Natural killer cell (primary cell): ENCODE measurements at regions of chr19 and their contacts with region 1.

Region 1: DNA sequence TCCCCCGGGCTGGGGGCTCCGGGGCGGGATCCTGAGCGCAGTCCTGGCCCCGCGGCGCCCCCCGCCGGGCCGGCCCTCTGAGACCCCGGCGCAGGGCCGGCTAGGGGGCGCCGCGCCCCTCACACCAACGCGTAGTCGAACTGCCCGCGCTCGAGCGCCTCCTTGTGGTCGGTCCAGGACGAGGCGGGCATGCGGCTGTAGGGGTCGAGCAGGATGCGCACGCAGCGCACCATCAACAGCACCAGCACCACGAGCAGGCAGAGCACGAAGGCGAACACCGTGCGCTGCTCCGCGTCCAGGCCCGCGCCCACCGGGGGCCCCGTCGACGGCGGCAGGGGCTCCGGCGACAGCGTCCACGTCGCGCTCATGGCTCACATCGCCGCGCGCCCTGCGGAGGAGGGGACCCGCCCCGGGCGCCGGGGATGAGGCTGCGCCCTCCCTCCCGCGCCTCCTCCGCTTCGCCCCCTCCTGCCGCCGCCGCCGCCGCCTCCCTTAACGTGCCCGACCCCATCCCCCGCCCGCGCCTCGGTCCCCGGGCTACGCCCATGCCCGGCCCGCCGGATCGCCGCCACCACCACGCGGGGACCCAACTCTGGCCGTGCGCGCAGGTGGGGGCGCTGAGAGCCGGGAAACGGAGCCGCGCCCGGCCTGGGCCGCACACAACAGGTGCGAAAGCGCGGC is 624 bp downstream of the CTXN1 start:
- DNase-seq: peak; percentile 80 to 91
- ATAC-seq: peak; percentile 11 to 22 (median 16)
- H3K4me3 ChIP-seq: no peak overlapping the region
- H3K4me3 Mint-ChIP-seq: peak overlapping the region; percentile 85
- H3K27ac ChIP-seq: no peak overlapping the region
- H3K27ac Mint-ChIP-seq: peak overlapping the region in 1 of 2 donors; percentile 74
- H3K4me1 ChIP-seq: peaks cover 35% of the 10 kb centered on the region
- H3K4me1 Mint-ChIP-seq: peaks cover 7 to 35% of the 10 kb centered on the region in 2 donors
- H3K27me3 ChIP-seq: no peaks in the 10 kb centered on the region
- H3K27me3 Mint-ChIP-seq: no peaks in the 10 kb centered on the region
- CTCF ChIP-seq: peak; percentile 83

Region 2: DNA sequence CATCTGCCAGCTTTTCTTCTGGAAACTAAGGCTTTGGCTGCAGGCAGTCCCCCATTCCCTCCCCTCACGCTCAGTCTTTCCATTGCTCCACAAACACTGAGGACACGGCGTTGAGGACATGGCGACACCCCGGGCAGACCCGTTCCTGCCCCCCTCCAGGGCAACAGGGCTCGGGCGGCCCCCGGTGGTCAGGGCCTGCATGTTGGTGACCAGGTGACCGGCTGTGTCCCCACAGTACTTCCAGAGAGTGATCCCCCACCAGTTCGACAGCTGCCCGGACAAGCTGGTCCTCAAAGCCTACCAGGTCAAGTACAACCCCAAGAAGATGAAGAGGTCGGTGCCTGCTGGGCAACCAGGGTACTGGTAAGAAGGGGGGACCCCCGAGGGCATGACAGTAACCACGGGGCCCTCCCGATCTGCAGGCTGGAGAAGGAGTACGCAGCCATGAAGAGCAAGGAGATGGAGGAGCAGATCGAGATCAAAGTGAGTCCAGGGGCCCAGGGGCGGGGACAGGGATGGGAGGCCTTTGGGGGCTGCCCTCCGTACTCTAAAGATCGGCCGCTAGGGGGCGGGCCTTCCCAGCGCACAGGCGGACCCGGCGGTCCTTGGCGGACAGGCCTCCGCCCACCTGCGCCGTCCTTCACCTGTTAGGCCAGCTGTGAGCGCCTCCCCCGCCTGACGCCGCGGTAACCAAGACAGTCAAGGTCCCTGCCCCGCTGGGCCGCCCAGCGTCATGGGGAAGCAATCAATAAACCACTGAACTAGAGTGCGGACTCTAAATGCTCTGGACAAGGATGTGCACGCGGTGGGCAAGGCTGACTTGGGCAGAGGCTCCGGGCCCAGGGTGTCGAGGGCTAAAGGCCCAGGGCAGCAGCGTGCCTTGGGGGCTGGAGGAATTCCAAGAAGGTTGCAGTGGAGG is 72.2 kb before region 1 on chr19:
- intact Hi-C with region 1: loop called (anchors 1 kb)
- DNase-seq: peak; percentile 70 to 79
- ATAC-seq: peak; percentile 74 to 98 (median 95)
- H3K4me3 ChIP-seq: no peak overlapping the region
- H3K4me3 Mint-ChIP-seq: no peak overlapping the region
- H3K27ac ChIP-seq: no peak overlapping the region
- H3K27ac Mint-ChIP-seq: peak overlapping the region in 1 of 2 donors; percentile 42
- H3K4me1 ChIP-seq: peaks cover 8% of the 10 kb centered on the region
- H3K4me1 Mint-ChIP-seq: peaks cover 9 to 10% of the 10 kb centered on the region in 2 donors
- H3K27me3 ChIP-seq: no peaks in the 10 kb centered on the region
- H3K27me3 Mint-ChIP-seq: no peaks in the 10 kb centered on the region
- CTCF ChIP-seq: peak; percentile 79

Region 3: DNA sequence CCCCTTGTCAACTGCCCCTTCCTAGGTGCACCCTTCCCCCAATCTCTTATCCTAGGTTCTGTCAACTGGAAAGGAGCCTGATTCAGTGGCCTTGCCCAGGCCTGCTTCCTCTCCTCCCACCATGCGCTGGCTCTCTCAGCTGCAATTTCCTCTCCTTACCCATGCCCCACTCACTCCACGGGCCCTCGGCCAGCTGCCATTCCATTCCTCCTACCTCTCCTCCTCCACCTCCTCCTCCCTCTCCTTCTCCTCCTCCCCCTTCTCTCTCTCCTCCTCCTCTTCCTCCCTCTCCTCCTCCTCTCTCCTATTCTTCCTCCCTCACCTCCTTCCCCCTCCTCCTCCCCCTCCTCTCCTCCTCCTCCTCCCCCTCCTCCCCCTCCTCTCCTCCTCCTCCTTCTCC is 27.7 kb after region 1 on chr19:
- intact Hi-C with region 1: no loop called
- DNase-seq: no peak
- ATAC-seq: no peak
- H3K4me3 ChIP-seq: no peak overlapping the region
- H3K4me3 Mint-ChIP-seq: no peak overlapping the region
- H3K27ac ChIP-seq: no peak overlapping the region
- H3K27ac Mint-ChIP-seq: no peak overlapping the region
- H3K4me1 ChIP-seq: no peaks in the 10 kb centered on the region
- H3K4me1 Mint-ChIP-seq: no peaks in the 10 kb centered on the region
- H3K27me3 ChIP-seq: no peaks in the 10 kb centered on the region
- H3K27me3 Mint-ChIP-seq: no peaks in the 10 kb centered on the region
- CTCF ChIP-seq: no peak